ENCODE measurements at regions of chr5 and their contacts with region 1.

Region 1: GRCh38 chr5:159749146-159749545 is 167.1 kb upstream of the ADRA1B start:
- DNase-seq: no peak
- H3K4me3 ChIP-seq: no peak overlapping the region
- H3K27ac ChIP-seq: no peak overlapping the region
- H3K4me1 ChIP-seq: no peaks in the 10 kb centered on the region
- CTCF ChIP-seq: no peak

Region 2: GRCh38 chr5:160626322-160626721 is 877.2 kb after region 1 on chr5:
- CTCF ChIA-PET with region 1: no interaction called
- POLR2A ChIA-PET with region 1: interaction called, 10 read pairs
- intact Hi-C with region 1: no loop called
- DNase-seq: no peak
- H3K4me3 ChIP-seq: no peak overlapping the region
- H3K27ac ChIP-seq: no peak overlapping the region
- H3K4me1 ChIP-seq: no peaks in the 10 kb centered on the region
- CTCF ChIP-seq: no peak

Region 3: DNA sequence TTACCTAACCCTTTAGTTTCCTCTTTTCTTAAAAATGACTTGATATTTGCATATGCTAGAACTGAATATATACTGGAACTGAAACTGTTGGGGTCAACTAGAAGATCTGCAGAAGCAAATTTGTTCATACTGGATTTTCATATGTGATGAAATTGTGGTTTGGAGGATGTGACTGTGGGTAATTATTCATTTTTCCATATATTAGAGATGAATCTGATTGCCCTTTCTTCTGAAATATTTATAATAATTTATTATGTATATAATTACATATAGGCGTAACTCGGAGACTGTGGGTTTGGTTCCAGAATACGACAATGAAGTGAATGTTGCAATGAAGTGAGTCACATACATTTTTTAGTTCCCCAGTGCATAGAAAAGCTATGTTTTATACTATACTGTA is 953.8 kb after region 1 on chr5:
- CTCF ChIA-PET with region 1: no interaction called
- POLR2A ChIA-PET with region 1: no interaction called
- intact Hi-C with region 1: no loop called
- DNase-seq: no peak
- H3K4me3 ChIP-seq: no peak overlapping the region
- H3K27ac ChIP-seq: no peak overlapping the region
- H3K4me1 ChIP-seq: no peaks in the 10 kb centered on the region
- CTCF ChIP-seq: no peak